BJ (cell line): ENCODE measurements at regions of chr4 and their contacts with region 1.

Region 1: DNA sequence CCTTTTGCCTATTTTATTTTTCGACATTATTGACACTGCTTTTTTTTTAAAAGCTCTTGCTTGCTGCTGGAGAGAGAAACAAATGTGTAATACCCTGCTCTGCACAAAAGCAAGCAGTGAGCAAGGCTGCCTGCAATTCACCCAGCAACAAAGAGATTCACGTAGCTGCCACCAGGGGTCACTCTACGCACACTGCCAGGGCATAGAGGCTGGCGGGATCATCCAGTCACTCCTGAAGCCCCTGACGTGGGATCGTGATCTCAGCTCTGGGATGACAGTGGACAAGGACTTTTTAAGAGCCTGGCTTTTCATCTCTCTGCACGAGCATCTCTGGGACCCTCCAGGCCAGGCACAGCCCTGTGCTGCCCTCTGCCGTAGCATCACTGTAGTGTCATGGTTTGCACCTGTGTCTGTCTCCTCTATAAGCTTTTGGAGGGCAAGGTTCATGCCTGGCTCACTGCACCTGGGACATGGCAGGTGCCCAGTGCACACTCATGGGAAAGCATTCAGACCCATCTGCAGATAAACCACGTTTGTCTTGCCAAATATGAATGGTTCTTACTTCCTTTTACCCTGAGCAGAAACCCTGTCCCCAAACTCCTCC is 19.8 kb downstream of the C4orf50 start:
- DNase-seq: no peak
- H3K4me3 ChIP-seq: no peak overlapping the region
- H3K27me3 ChIP-seq: no peaks in the 10 kb centered on the region
- CTCF ChIP-seq: peak; percentile 90

Region 2: DNA sequence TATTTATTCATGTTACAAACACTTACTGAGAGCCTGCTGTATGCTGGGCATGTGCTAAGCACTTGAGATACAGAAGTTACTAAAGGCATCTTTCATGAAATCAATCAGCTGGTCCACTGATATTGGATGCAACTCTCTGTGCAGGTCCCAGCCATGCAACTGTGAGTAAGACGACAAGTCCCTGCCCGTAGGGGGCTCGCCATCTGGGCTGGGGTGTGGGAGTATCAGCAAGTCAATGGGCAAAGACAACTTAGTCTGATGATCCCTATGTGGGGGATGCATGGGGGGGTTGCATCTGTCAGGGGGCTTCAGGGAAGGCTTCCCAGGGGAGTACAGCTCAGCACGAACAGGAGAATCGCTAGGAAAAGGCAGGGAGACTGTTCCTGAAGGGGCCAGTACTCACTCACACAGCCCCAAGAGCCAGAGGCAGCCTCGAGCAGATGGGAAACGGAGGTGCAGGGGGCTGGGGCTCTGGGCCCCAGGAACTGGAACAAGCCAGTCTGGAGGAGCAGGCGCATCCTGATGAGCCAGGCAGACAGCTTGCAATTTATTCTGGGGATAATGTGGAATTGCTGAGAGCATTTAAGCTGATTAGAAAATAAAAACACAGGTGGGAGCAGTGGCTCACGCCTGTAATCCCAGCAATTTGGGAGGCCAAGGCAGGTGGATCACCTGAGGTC is 145.8 kb before region 1 on chr4:
- CTCF ChIA-PET with region 1: no interaction called
- POLR2A ChIA-PET with region 1: no interaction called
- DNase-seq: no peak
- H3K4me3 ChIP-seq: no peak overlapping the region
- H3K27me3 ChIP-seq: no peaks in the 10 kb centered on the region
- CTCF ChIP-seq: no peak

Region 3: DNA sequence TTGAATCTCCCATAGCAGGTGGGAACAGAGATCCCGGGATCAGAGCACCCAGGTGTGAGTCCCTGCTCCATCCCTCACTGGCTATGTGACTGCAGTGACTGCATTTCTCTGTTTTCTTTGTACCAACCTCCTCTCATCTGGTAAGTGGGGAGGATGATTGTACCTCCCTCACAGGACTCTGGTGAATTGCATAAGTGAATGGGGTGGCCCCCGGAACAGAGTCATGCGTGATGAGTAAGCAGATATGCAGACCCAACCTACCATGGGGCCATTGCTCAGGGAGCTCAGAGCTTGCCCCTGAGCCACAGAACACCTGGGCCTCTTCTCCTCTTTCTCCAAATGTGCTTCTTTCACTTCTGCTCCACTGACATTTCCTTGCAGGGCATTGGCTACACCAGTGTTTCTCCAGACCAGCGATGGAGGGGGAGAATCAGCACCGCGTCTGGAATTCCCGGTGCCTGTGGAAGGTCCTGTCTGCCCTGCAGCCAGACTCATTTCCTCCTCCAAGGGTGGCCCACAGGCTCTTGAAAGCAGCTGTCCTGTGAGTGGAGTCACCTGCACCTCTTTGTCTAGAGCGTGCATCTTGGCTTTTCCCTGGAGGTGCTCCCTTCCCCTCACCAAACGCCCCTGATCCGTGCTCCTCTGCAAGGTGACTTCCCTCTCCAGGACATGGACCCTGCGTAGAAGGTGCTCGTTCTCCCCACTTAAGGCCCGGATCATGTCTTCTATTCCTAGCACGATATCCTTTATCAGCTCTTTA is 10.2 kb before region 1 on chr4:
- CTCF ChIA-PET with region 1: interaction called, 13 read pairs
- POLR2A ChIA-PET with region 1: no interaction called
- DNase-seq: no peak
- H3K4me3 ChIP-seq: no peak overlapping the region
- H3K27me3 ChIP-seq: no peaks in the 10 kb centered on the region
- CTCF ChIP-seq: no peak

Region 4: GRCh38 chr4:6087673-6088341 is 89.4 kb after region 1 on chr4:
- CTCF ChIA-PET with region 1: interaction called, 26 read pairs
- POLR2A ChIA-PET with region 1: no interaction called
- DNase-seq: no peak
- H3K4me3 ChIP-seq: no peak overlapping the region
- H3K27me3 ChIP-seq: no peaks in the 10 kb centered on the region
- CTCF ChIP-seq: peak; percentile 32

Region 5: DNA sequence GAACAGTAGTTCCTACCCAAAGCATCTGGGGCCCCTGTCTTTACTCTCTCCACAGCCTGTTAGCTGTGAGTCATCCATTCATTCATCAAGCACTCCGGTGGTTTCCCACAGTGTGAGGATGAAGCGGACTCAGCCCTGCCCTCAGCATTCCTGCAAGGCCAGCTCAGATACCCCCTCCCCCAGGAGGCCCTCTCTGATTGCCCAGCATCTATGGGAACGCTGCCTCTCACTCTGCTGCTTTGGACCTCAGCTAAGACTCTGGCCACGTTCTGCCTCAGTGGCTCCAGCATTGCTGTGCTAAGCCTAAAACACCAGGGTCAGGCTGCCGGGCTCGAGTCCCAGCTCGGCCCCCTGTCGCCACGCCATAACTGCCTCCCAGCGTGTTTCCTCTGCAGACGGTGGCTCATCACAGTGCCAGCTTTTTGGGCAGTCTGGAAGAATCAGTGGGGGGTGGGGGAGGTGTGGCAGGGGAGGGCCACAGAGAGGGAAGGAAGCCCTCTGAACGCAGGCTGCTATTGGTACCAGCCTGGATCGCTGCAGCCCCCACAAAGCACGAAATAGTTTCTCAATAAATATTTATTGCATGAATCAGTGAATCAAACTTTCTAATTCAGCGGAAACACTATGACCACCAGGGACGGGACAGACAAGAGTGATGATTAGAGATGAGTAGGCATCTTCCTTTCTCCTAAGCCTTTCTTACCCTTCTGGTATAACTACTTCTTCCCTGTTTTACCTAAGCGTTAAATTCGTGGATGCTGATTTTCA is 1268.3 kb after region 1 on chr4:
- CTCF ChIA-PET with region 1: no interaction called
- POLR2A ChIA-PET with region 1: no interaction called
- DNase-seq: peak; percentile 41
- H3K4me3 ChIP-seq: no peak overlapping the region
- H3K27me3 ChIP-seq: no peaks in the 10 kb centered on the region
- CTCF ChIP-seq: no peak